Activated naive CD4-positive, alpha-beta T cell treated with anti-CD3 and anti-CD28 coated beads for 36 hours (primary cell): ENCODE measurements at regions of chr2 and their contacts with region 1.

Region 1: GRCh38 chr2:105789745-105790460 is 45.2 kb downstream of the NCK2 start:
- DNase-seq: peak; percentile 86
- H3K4me3 Mint-ChIP-seq: peak overlapping the region; percentile 65
- H3K27ac Mint-ChIP-seq: peak overlapping the region; percentile 88
- H3K4me1 Mint-ChIP-seq: peaks cover 94% of the 10 kb centered on the region
- H3K27me3 Mint-ChIP-seq: no peaks in the 10 kb centered on the region

Region 2: DNA sequence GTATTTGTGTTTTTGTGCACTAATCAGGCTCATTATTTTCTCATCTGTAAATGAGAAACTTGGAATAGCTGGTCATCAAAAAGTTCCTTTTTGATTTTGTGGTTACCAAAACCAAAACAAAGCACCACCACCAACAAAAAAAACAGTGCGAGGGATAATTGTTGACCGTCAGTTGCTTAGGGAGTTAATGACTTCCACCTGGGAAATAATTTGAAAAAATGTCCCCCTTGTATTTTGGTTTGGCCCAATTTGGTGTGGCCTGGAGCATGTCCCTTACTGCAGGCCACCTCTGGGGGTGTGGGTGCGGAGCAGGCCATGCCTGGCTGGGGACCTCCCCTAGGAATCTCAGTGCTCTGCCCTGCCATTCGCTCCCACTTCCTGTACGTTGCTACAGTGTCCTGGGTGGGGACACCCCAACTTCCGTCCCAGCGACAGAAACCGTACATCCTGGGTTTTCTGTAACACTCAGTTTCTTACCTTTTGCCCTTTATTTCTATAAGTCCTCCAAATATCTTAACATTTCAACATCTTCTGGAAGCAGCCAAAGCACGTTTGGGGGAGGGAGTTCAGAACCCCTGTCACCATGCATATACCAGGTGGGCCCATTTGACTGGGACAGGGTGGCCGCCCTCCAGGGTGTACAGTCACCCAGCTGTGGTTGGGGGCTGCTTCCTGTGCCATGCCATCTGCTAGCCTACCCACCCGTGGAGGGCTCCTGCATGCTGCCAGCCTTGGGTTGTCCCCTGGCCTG is 13.9 kb before region 1 on chr2:
- CTCF ChIA-PET with region 1: interaction called, 8 read pairs
- intact Hi-C with region 1: loop called (anchors 1 kb)
- DNase-seq: peak; percentile 66
- H3K4me3 Mint-ChIP-seq: peak overlapping the region; percentile 51
- H3K27ac Mint-ChIP-seq: peak overlapping the region; percentile 81
- H3K4me1 Mint-ChIP-seq: peaks cover 91% of the 10 kb centered on the region
- H3K27me3 Mint-ChIP-seq: no peaks in the 10 kb centered on the region

Region 3: DNA sequence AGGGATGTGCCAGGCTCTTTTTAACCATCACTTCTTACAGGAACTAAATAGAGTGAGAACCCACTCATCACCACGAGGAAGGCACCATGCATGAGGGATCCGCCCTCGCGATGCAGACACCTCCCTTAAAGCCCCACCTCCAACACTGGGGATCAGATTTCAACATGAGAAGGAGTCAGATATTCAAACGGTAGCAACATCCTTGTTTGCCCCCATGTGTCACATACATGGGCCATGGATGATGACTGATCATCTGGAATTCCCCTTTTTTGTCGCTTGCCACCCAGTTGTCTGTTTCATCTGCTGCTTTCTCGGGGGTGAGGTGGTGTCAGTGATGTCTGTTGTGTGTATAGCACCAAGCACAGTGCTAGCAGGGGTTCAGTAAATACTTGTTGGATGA is 12.7 kb after region 1 on chr2:
- CTCF ChIA-PET with region 1: interaction called, 3 read pairs
- intact Hi-C with region 1: loop called (anchors 1 kb)
- DNase-seq: peak; percentile 82
- H3K4me3 Mint-ChIP-seq: peak overlapping the region; percentile 8
- H3K27ac Mint-ChIP-seq: peak overlapping the region; percentile 86
- H3K4me1 Mint-ChIP-seq: peaks cover 94% of the 10 kb centered on the region
- H3K27me3 Mint-ChIP-seq: no peaks in the 10 kb centered on the region

Region 4: GRCh38 chr2:106104332-106105062 is 314.6 kb after region 1 on chr2:
- CTCF ChIA-PET with region 1: no interaction called
- intact Hi-C with region 1: no loop called
- DNase-seq: peak; percentile 80
- H3K4me3 Mint-ChIP-seq: no peak overlapping the region
- H3K27ac Mint-ChIP-seq: no peak overlapping the region
- H3K4me1 Mint-ChIP-seq: peaks cover 18% of the 10 kb centered on the region
- H3K27me3 Mint-ChIP-seq: no peaks in the 10 kb centered on the region